Activated CD8-positive, alpha-beta memory T cell treated with anti-CD3 and anti-CD28 coated beads, Interleukin-2, amount 10 ng/mL, durations not matched to agents 7 days and 5 days (primary cell): ENCODE measurements at regions of chr17 and their contacts with region 1.

Region 1: DNA sequence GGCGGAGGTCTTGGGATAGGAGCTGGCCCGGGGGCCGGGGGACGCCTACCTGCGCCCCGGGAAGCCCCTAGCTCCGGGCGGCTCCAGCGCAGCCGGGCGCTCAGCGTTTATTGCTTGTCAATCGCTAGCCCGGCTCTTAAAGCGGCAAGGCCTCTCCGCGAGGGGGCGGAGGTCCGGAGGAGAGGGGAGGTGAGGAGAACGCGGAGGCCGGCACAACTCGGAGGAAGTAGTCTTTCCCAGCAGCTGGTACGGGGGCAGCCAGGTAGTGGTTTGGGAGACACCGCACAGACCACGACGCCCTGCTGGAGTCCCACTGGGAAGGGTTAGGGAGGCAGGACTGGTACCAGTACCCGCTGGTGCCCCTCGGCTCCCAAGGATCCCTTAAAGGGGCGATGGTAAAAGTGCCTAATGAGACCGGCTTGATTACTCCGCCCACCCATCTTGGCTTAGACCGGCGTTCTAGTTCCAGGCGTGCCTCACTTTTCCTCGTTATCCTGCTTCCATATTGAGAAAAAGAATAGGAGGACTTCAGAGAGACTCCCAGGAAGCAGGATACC is at the start of gene MPP2:
- DNase-seq: peak; percentile 46
- ATAC-seq: peak; percentile 32
- H3K4me3 Mint-ChIP-seq: no peak within 1 kb of the TSS
- H3K27ac Mint-ChIP-seq: no peak within 1 kb of the TSS
- H3K4me1 Mint-ChIP-seq: peaks cover 7% of the 10 kb centered on the region
- H3K27me3 Mint-ChIP-seq: peaks cover 59% of the 10 kb centered on the region
- total RNA-seq, gene MPP2: 0.56 to 0.61 TPM

Region 2: GRCh38 chr17:43927060-43927864 is 19.8 kb after region 1 on chr17:
- CTCF ChIA-PET with region 1: interaction called, 11 read pairs
- DNase-seq: no peak
- ATAC-seq: no peak
- H3K4me3 Mint-ChIP-seq: peak overlapping the region; percentile 50
- H3K27ac Mint-ChIP-seq: no peak overlapping the region
- H3K4me1 Mint-ChIP-seq: peaks cover 27% of the 10 kb centered on the region
- H3K27me3 Mint-ChIP-seq: peaks cover 21% of the 10 kb centered on the region